OCI-LY7 (cell line): ENCODE measurements at regions of chr1 and their contacts with region 1.

Region 1: DNA sequence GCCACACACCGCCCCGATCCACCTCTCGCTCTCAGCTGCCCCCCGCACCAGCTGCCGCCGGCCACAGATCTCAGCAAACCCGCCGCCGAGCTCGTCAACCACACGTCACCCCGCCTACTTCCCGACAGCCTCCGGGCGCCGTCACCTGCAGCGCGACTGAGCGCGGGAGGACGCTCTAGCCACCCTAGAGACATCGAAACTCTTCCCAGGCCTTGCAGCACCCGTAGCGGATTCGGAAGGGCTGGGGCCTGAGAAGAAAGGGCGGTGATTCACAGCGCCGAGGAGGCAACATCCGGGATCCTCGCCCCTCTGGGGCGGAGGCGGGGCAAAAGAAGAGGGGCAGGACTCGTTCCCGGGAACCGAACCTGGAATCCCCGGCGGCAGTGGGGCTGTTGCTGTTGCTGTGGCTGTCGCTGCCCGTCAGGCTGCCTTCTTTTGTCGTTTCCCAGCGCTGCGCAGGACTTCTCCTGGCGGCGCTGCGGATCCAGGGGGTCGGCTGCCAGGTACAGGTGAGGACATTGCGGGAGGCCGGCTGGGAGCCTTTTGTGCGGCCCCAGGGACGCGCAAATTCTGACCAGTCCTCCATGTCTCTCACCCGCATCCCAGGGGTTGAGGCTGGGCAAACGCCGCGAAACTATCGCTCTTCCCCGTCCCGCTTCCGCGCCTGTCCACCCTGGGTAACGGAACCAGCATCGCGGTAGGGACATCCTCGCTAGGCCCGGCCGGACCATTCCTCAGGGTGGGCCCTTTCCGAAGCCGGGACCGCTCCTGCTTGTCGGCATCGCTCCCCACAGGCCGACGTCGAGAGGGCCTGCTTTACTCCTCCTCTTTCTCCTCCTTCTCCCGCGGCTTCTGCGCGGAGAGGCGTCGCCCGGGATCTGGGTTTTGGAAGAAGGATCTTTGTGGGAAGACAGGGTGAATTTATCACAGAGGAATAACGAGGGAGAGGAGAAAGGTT is at the starts of genes RO60 and UCHL5:
- DNase-seq: peak; percentile 97
- H3K4me3 ChIP-seq: peak within 1 kb of the TSS; percentile 100
- H3K27ac ChIP-seq: peak within 1 kb of the TSS; percentile 82
- H3K4me1 ChIP-seq: peaks cover 39% of the 10 kb centered on the region
- CTCF ChIP-seq: no peak
- total RNA-seq, gene RO60: 70.4 and 72.4 TPM in 2 replicates
- total RNA-seq, gene UCHL5: 28.6 and 32.7 TPM in 2 replicates

Region 2: DNA sequence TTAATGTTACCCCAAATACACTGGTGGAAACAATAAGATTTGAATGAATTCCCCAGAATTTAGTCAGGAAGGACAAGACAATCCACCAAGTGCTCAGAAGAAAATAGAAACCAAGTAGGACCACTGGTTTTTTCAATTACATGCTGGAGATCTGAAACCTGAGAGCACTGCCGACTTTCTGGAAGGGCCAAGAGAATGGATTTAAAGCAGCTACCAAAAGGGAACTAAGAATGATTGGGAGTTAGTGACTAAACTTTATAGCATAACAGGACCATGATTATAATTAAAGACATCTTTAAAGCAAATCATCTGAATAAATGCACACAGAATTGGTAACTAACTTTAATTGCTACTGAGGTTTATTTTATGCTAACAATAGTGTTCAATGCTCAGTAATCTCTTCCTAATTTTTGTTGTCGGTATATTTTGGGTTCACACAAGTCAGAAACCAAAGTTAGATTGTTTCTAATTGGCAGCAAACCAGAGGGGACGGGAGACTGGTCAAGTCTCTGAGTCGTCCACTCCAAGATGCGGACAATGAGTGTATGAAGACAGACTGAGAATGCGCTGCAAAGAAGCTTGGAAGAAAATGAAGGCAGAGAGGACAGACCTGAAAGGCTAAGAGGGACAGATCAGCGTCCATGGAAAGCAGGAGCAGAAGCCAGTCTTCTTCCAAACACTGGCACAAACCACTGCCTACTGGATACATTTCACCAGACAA is 425.9 kb before region 1 on chr1:
- CTCF ChIA-PET with region 1: no interaction called
- POLR2A ChIA-PET with region 1: interaction called, 6 read pairs
- intact Hi-C with region 1: loop called (anchors 2 kb)
- DNase-seq: no peak
- H3K4me3 ChIP-seq: peak overlapping the region; percentile 80
- H3K27ac ChIP-seq: peak overlapping the region; percentile 100
- H3K4me1 ChIP-seq: peaks cover 66% of the 10 kb centered on the region
- CTCF ChIP-seq: no peak

Region 3: DNA sequence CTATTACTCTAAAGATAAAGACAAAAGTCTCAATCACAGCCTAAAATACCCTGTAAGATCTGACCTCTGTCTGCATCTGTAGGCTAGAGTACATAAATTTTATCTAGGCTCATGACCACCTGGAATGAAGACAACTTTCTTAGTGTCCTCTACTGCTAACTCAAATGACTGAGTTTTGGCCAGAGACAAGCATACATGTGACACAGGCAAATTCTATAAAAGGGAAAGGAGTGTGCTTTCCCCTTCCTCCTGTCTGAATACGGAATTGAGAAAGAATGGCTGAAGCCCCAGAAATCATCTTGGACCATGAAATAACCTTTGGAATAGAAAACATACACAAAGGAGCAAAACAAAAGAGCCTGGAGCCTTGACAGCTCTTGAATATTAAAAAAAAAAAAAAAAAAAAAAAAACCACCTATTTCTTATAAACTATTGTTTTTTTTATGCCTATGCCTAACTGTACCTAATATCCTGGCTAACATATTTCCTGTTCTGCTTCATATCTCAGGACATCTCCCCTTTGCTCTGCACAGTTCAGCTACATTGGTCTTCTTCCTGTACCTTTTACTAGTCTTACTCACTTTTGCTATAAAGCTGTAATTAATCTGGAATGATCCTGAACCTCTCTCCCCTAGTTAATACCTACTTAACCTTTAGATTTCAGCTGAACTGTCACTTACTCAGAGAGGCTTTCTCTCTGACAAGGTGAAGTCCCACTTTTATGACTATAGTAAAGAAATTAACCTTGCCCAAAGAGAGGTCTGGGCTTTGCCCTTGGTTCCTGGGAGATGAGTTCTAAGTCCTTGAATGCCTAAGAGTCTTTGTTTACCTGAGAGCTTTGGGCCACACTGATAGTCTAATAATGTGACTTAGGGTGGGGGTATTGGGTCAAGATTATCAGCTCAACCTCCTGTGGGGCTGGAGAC is 16.5 kb before region 1 on chr1:
- CTCF ChIA-PET with region 1: no interaction called
- POLR2A ChIA-PET with region 1: interaction called, 18 read pairs
- intact Hi-C with region 1: no loop called
- DNase-seq: no peak
- H3K4me3 ChIP-seq: no peak overlapping the region
- H3K27ac ChIP-seq: no peak overlapping the region
- H3K4me1 ChIP-seq: no peaks in the 10 kb centered on the region
- CTCF ChIP-seq: no peak

Region 4: GRCh38 chr1:193069748-193070385 is 10.3 kb after region 1 on chr1:
- CTCF ChIA-PET with region 1: no interaction called
- POLR2A ChIA-PET with region 1: interaction called, 19 read pairs
- intact Hi-C with region 1: no loop called
- DNase-seq: peak; percentile 38
- H3K4me3 ChIP-seq: peak overlapping the region; percentile 18
- H3K27ac ChIP-seq: peak overlapping the region; percentile 38
- H3K4me1 ChIP-seq: peaks cover 27% of the 10 kb centered on the region
- CTCF ChIP-seq: peak; percentile 79

Region 5: DNA sequence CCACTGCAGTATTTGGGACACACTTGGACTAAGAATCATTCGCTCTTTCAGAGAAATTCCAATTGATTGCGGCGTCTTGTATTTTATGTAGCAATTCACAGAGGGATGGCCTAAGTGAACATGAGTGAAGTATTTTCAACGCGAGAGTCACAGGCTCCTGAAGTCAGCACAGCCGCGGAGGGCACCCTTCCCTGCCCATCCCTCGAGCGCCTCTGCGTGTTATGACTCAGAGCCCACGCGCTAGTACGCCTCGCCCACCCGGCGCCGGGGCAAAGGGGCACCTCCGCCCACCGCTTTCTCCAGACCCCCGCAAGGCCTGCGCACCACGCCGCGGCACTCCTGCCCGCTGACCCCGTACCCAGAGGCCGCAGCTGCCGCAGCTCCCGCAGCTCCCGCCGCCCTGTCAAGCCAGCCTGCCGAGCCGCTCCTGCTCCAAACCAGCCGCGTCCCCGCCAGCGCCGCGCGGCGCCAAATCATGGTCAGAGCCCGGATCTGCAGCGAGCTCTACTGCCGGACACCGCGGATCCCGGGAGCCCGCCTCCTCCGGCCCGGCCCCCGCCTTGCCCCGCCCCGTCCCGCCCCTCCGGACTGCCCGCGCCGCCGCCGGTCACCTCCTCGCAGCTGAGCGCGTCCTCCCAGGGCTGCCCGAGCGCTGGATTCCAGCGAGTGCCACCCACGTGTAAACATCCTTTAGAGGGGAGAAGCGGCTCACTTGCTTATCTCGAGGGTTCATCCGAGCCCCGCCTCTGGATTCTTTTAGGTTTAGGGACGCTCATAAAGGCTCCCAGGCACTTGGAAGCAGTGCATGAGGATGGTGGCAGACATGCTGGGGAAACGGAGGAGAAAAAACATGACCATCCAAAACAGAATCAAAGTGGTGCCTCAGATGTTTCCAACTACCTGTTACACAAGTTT is 45.6 kb after region 1 on chr1 and contains the start of gene GLRX2:
- CTCF ChIA-PET with region 1: interaction called, 3 read pairs
- POLR2A ChIA-PET with region 1: interaction called, 7 read pairs
- intact Hi-C with region 1: loop called (anchors 1 kb)
- DNase-seq: peak; percentile 75
- H3K4me3 ChIP-seq: peak within 1 kb of the TSS; percentile 84
- H3K27ac ChIP-seq: peak within 1 kb of the TSS; percentile 23
- H3K4me1 ChIP-seq: peaks cover 15% of the 10 kb centered on the region
- CTCF ChIP-seq: peak; percentile 42
- total RNA-seq, gene GLRX2: 10.6 and 11.0 TPM in 2 replicates